CD4-positive, alpha-beta T cell (primary cell): ENCODE measurements at regions of chr17 and their contacts with region 1.

Region 1: GRCh38 chr17:50397111-50397918 is at the start of gene LRRC59:
- DNase-seq: peak; percentile 87 to 96 (median 92)
- ATAC-seq: peak; percentile 99
- H3K4me3 ChIP-seq: peak within 1 kb of the TSS; percentile 100
- H3K4me3 Mint-ChIP-seq: peak within 1 kb of the TSS; percentile 99
- H3K27ac ChIP-seq: peak within 1 kb of the TSS; percentile 60 to 87
- H3K27ac Mint-ChIP-seq: peak within 1 kb of the TSS; percentile 83
- H3K4me1 ChIP-seq: peaks cover 30% of the 10 kb centered on the region
- H3K4me1 Mint-ChIP-seq: peaks cover 45% of the 10 kb centered on the region
- H3K27me3 ChIP-seq: no peaks in the 10 kb centered on the region
- H3K27me3 Mint-ChIP-seq: no peaks in the 10 kb centered on the region
- CTCF ChIP-seq: peak; percentile 99
- total RNA-seq, gene LRRC59: 45.1 to 51.5 TPM

Region 2: GRCh38 chr17:50345432-50346312 is 51.6 kb before region 1 on chr17 and contains the start of gene XYLT2:
- CTCF ChIA-PET with region 1: interaction called, 6 read pairs
- POLR2A ChIA-PET with region 1: interaction called, 33 read pairs
- intact Hi-C with region 1: loop called in 1 of 2 experiments (anchors 2 kb)
- DNase-seq: peak; percentile 77 to 97 (median 92)
- ATAC-seq: peak; percentile 92
- H3K4me3 ChIP-seq: peak within 1 kb of the TSS; percentile 85
- H3K4me3 Mint-ChIP-seq: peak within 1 kb of the TSS; percentile 95
- H3K27ac ChIP-seq: peak within 1 kb of the TSS; percentile 53 to 65
- H3K27ac Mint-ChIP-seq: peak within 1 kb of the TSS; percentile 76
- H3K4me1 ChIP-seq: peaks cover 28% of the 10 kb centered on the region
- H3K4me1 Mint-ChIP-seq: peaks cover 34% of the 10 kb centered on the region
- H3K27me3 ChIP-seq: no peaks in the 10 kb centered on the region
- H3K27me3 Mint-ChIP-seq: no peaks in the 10 kb centered on the region
- CTCF ChIP-seq: no peak
- total RNA-seq, gene XYLT2: 11.0 to 12.2 TPM

Region 3: GRCh38 chr17:50361561-50362480 is 35.5 kb before region 1 on chr17:
- CTCF ChIA-PET with region 1: interaction called, 22 read pairs
- POLR2A ChIA-PET with region 1: interaction called, 35 read pairs
- intact Hi-C with region 1: loop called (anchors 2 to 5 kb)
- DNase-seq: peak; percentile 39 to 84 (median 49)
- ATAC-seq: peak; percentile 97
- H3K4me3 ChIP-seq: no peak overlapping the region
- H3K4me3 Mint-ChIP-seq: peak overlapping the region; percentile 13
- H3K27ac ChIP-seq: no peak overlapping the region
- H3K27ac Mint-ChIP-seq: peak overlapping the region; percentile 10
- H3K4me1 ChIP-seq: peaks cover 11% of the 10 kb centered on the region
- H3K4me1 Mint-ChIP-seq: peaks cover 9% of the 10 kb centered on the region
- H3K27me3 ChIP-seq: no peaks in the 10 kb centered on the region
- H3K27me3 Mint-ChIP-seq: no peaks in the 10 kb centered on the region
- CTCF ChIP-seq: peak; percentile 79

Region 4: DNA sequence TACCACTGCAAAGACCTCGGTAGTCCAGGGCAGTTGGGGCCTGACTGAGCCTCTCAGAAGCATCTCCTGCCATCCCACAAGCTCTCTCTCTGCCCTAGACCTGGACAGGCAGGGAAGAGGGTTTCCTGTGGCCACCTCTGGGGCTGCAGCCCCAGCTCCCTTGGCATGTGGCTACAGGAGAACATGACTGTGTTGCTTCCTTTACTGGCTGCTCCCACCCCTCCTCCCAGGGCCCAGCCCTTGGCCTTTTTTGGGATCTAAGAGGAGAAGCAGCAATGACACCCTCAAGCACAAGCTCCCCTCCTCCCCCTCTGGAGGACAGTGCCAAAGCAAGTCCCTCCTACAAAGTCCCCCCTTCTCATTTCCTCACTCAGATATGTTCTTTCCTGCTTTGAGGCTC is 29.9 kb before region 1 on chr17:
- CTCF ChIA-PET with region 1: interaction called, 22 read pairs
- POLR2A ChIA-PET with region 1: interaction called, 52 read pairs
- intact Hi-C with region 1: loop called (anchors 2 to 5 kb)
- DNase-seq: no peak
- ATAC-seq: no peak
- H3K4me3 ChIP-seq: no peak overlapping the region
- H3K4me3 Mint-ChIP-seq: no peak overlapping the region
- H3K27ac ChIP-seq: no peak overlapping the region
- H3K27ac Mint-ChIP-seq: no peak overlapping the region
- H3K4me1 ChIP-seq: peaks cover 19% of the 10 kb centered on the region
- H3K4me1 Mint-ChIP-seq: peaks cover 14% of the 10 kb centered on the region
- H3K27me3 ChIP-seq: no peaks in the 10 kb centered on the region
- H3K27me3 Mint-ChIP-seq: no peaks in the 10 kb centered on the region
- CTCF ChIP-seq: no peak

Region 5: GRCh38 chr17:50425682-50426471 is 28.6 kb after region 1 on chr17 and contains the start of gene ACSF2:
- CTCF ChIA-PET with region 1: interaction called, 14 read pairs
- POLR2A ChIA-PET with region 1: interaction called, 21 read pairs
- intact Hi-C with region 1: loop called in 1 of 2 experiments (anchors 2 kb)
- DNase-seq: peak; percentile 43 to 82 (median 65)
- ATAC-seq: peak; percentile 88
- H3K4me3 ChIP-seq: peak within 1 kb of the TSS; percentile 79
- H3K4me3 Mint-ChIP-seq: peak within 1 kb of the TSS; percentile 87
- H3K27ac ChIP-seq: peak within 1 kb of the TSS; percentile 51 to 63
- H3K27ac Mint-ChIP-seq: peak within 1 kb of the TSS; percentile 70
- H3K4me1 ChIP-seq: peaks cover 36% of the 10 kb centered on the region
- H3K4me1 Mint-ChIP-seq: peaks cover 45% of the 10 kb centered on the region
- H3K27me3 ChIP-seq: no peaks in the 10 kb centered on the region
- H3K27me3 Mint-ChIP-seq: no peaks in the 10 kb centered on the region
- CTCF ChIP-seq: no peak
- total RNA-seq, gene ACSF2: 11.9 to 13.9 TPM